Caco-2 (cell line): ENCODE measurements at regions of chr1 and their contacts with region 1.

Region 1: GRCh38 chr1:172976222-172977041 is 74.3 kb downstream of the TNFSF18 start:
- DNase-seq: peak; percentile 67 to 71
- H3K4me3 ChIP-seq: no peak overlapping the region
- H3K4me3 Mint-ChIP-seq: peak overlapping the region; percentile 15
- H3K27ac Mint-ChIP-seq: peak overlapping the region; percentile 64
- H3K4me1 ChIP-seq: peaks cover 31% of the 10 kb centered on the region
- H3K4me1 Mint-ChIP-seq: peaks cover 35% of the 10 kb centered on the region
- H3K27me3 ChIP-seq: no peaks in the 10 kb centered on the region
- H3K27me3 Mint-ChIP-seq: no peaks in the 10 kb centered on the region
- CTCF ChIP-seq: no peak

Region 2: DNA sequence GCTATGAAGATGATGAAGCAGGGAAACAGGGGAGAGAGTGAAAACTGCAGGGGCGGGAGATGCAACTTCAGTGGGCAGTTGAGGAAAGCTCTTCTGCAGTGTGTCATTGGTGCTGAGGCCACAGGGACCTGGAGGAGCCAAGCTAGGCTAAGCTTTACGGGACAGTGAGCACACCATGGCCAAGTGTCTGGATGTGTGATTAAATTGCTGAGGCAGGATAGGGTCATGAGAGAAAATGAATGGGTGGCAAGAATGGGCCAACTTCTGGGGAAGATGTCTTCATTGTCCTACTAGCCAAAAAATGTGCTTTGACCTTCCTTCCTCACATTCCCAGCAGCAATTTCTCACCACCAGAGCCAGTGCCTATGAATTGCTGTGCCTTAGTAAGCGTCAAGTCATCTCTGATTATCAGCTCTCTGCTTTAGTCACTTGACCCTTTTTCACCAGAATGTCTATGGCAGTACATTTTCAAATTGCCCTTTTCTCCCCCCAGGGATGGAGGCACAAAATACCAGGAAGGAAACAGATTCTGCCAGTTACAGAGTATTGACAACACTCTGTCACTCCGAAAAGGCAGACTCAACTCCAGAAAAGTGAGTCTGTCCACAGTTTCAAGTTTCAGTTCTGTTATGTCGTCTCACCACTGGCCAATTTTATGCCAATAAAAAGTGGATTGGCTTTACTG is 93.2 kb before region 1 on chr1:
- CTCF ChIA-PET with region 1: no interaction called
- POLR2A ChIA-PET with region 1: no interaction called
- intact Hi-C with region 1: loop called (anchors 10 kb)
- DNase-seq: no peak
- H3K4me3 ChIP-seq: no peak overlapping the region
- H3K4me3 Mint-ChIP-seq: no peak overlapping the region
- H3K27ac Mint-ChIP-seq: peak overlapping the region; percentile 9
- H3K4me1 ChIP-seq: peaks cover 37% of the 10 kb centered on the region
- H3K4me1 Mint-ChIP-seq: peaks cover 22% of the 10 kb centered on the region
- H3K27me3 ChIP-seq: no peaks in the 10 kb centered on the region
- H3K27me3 Mint-ChIP-seq: no peaks in the 10 kb centered on the region
- CTCF ChIP-seq: no peak

Region 3: DNA sequence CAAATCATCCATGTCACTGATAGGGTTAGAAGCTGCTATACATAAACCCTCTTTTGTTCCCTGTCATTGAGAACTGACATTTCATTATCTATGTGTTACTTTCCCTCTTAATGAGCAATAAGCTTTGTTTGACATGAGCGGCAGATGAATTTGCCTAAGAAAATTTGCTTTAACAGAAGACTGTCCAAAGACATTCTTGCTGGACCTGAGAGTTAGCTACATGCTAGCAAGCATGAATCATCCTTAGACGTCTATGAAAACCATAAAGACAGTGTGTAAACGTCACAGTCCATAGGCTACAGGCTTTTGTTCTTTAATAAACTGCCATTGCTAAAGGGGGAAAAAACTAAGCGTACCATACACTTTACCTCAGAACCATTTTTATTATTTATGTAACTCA is 157.6 kb after region 1 on chr1:
- CTCF ChIA-PET with region 1: no interaction called
- POLR2A ChIA-PET with region 1: no interaction called
- intact Hi-C with region 1: no loop called
- DNase-seq: no peak
- H3K4me3 ChIP-seq: no peak overlapping the region
- H3K4me3 Mint-ChIP-seq: no peak overlapping the region
- H3K27ac Mint-ChIP-seq: no peak overlapping the region
- H3K4me1 ChIP-seq: peaks cover 18% of the 10 kb centered on the region
- H3K4me1 Mint-ChIP-seq: peaks cover 4% of the 10 kb centered on the region
- H3K27me3 ChIP-seq: no peaks in the 10 kb centered on the region
- H3K27me3 Mint-ChIP-seq: no peaks in the 10 kb centered on the region
- CTCF ChIP-seq: no peak